Left cardiac atrium (tissue), 4 donors: ENCODE measurements at regions of chr9 and their contacts with region 1.

Region 1: DNA sequence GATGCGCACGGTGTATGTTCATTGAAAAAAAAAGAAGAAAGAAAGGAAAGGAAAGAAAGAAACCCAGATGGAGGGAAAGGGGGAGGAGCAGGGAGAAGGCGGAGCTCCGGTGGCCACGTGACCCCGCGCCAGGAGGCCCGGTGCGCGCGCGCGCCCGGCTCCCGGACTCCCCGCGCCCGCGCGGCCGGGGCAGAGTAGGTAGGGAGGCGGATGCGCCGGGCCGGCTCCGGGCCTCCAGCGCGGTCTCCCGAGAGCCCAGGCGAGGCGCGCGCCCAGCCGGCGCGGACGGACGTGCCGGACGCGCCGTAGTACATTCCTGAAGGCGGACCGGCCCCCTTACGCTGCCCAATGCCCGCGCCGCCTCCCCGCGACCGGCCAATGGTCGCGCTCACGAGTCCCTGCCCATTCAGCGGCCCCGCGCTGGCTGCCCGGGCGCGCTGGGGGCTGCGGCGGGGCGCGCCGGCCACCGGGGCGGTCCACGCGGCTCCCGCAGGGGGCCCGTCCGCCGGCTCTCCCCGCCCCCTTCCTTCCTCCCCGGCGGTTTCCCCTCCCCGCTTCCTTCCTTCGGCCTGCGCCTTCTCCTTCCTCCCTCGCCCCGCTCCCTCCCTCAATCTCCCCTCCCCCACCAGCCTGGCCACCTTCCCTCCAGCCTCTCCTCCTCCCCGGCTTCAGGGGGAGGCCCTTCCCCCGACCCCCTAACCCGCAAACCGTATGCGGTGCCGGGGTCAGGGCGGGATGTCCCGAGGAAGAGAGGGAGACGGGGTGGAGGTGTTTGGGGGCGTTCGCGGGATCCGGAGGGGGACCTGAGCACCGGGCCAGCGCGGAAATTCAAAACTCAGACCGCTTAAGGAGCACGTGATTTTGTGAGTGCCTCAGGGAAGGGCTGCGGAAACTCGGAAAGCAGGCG is 5.8 kb downstream of the PTCH1 start:
- DNase-seq: peak; percentile 91
- ATAC-seq: peak; percentile 80 to 83

Region 2: DNA sequence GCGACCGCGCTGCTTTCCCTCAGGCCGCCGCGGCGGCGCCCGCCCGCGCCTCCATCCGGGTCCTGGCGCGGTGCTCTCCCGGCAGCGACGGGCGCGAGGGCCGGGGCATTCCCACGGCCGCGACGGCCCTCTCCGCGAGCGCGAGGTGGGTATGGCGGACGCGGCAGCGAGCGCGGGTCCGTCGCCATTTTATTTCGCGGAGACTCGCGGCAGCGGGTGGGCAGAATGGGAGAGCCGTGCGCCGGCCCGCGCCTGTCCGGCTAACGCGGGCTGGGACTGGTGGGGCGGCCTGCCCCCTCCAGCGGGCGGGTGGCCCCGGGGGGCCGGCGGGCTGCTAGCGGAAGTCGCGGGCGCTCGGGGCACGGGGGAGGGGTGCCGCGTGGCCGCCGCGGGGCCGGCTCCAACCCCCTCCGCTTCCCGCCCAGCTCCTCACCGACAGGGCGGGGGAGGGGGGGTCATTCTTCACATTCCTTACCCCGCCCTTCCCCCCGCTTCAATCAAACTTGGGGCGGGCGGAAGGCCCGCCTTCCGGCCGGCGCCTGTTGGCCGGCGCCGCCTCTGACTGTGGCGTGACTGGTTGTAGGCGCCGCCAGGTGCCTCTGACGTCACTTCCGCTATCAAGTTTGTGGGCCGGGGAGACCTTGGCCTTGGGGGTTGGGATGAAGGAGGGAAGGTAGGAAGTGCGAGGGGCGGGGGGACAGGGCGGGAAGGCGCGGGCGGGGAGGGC is 1344.6 kb before region 1 on chr9:
- intact Hi-C with region 1: loop called in 1 of 2 experiments (anchors 10 kb)
- DNase-seq: peak; percentile 98
- ATAC-seq: peak; percentile 87 to 88

Region 3: DNA sequence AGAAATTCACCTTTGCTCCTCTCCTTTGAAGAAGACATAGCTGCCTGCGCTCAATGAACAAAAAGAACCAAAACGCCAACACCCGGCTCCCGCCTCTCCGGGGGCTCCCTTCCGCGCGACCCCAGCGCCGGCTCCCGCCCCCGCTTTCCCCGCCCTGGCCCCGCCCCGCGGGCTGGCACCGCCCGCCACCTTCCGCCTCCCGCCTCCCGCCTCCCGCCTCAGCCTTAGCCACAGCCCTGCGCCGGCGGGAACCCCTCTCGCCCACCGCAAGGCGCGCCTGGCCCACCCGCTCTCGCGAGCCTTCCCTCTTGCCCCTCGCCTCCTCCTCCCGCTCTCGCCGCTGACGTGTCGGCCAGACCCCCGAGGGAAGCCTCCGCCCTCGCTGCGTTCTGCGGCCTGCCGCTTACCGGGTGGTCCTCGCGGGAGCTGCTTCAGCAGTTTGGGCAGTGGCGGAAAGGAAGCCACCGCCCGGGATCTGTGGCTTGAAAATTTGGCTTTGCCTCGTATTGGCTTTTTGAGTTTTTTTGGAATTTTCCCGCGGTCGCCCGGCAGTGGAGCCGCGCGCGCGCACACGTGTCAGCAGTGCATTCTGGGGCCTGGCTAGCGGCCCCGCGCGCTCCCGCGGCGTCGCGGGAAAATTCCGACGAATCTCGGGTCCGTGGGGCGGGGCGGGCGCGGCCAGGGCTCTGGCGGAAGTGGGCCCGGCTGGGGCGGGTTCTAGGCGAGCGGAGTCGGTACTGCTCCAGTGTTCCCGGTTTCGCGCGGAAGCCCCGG is 193.7 kb before region 1 on chr9 and contains the start of gene FANCC:
- intact Hi-C with region 1: loop called in 1 of 2 experiments (anchors 10 kb)
- DNase-seq: peak; percentile 96
- ATAC-seq: peak; percentile 97 to 98
- total RNA-seq, gene FANCC: 5.0 to 6.2 TPM

Region 4: GRCh38 chr9:95641586-95641985 is 130.6 kb after region 1 on chr9:
- intact Hi-C with region 1: loop called in 1 of 2 experiments (anchors 10 kb)
- DNase-seq: no peak
- ATAC-seq: no peak

Region 5: DNA sequence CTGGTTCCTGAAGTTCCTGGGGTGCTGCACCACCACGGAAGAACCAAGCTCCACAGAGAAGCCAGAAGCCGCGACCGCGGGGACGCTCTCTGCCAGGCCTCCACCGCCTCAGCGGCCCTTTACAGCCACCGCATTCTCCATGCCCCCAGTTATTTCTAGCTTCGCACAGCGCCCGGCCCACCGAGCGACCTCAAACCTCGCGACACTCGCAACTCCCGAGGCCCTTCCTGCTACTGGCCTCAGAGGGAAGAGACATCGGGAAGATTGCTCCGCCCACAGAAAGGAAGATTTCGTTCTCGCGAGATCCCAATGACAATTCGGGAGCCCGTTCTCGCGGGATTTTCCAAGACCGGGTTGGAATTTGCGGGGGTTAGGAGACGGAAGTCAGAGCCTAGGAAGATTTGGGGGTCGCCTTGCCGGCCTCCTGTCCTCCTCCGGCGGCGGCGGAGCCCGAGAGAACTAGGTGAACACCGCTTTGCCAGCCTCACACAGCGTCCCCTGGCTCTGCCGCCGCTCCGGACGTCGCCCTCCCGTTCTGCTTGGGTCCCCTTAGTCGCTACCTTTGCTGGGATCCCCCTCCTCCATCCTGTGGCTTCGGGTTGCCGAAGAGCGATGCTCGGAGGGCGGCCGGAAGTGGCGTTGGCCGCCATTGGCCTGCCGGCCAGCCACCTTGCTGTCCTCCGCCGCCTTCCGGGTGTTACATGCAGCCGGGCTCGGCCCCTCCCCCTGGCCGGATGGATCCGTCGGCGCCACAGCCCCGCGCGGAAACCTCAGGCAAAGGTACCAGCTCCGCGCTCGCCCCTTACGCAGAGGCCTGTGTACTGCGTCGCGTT is 364.6 kb after region 1 on chr9 and contains the start of gene ERCC6L2:
- intact Hi-C with region 1: loop called in 1 of 2 experiments (anchors 10 kb)
- DNase-seq: peak; percentile 96
- ATAC-seq: peak; percentile 96 to 97
- total RNA-seq, gene ERCC6L2: 22.9 to 37.3 TPM